Tibial artery (tissue), 4 donors: ENCODE measurements at regions of chr9 and their contacts with region 1.

Region 1: GRCh38 chr9:122144836-122145591 is 14.6 kb downstream of the NDUFA8 start:
- DNase-seq: no peak
- H3K4me3 ChIP-seq: no peak overlapping the region
- H3K27ac ChIP-seq: no peak overlapping the region
- H3K4me1 ChIP-seq: no peaks in the 10 kb centered on the region
- H3K27me3 ChIP-seq: no peaks in the 10 kb centered on the region
- CTCF ChIP-seq: no peak

Region 2: GRCh38 chr9:120723547-120723946 is 1421.5 kb before region 1 on chr9:
- intact Hi-C with region 1: loop called (anchors 5 kb)
- DNase-seq: peak in 1 of 2 donors; percentile 79
- H3K4me3 ChIP-seq: no peak overlapping the region
- H3K27ac ChIP-seq: peak overlapping the region; percentile 3 to 55
- H3K4me1 ChIP-seq: peaks cover 0 to 13% (median 0%) of the 10 kb centered on the region in 4 donors
- H3K27me3 ChIP-seq: no peaks in the 10 kb centered on the region
- CTCF ChIP-seq: no peak